ENCODE measurements at regions of chr20 and their contacts with region 1.

Region 1: DNA sequence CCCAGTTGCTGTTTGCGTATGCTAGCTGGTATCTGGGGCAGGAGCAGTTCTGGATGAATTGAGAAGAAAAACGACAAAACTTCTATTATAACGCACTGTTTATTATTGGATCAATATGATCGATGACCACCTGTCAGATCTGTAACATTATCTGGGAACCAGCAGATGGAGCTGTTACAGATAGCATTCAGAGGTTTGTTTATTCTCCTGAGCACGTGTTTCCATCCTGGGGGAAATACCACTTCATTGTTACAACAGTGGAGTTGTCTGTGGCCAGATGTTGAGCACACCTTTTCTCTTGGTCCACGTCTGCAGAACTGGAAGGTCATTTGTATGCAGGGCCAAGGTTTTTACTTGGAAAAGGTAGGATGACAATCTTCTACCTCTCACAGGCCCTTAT is 16.0 kb upstream of the NKX2-2 start:
- DNase-seq: no peak
- ATAC-seq: peak; percentile 69
- H3K4me3 Mint-ChIP-seq: no peak overlapping the region
- H3K27ac Mint-ChIP-seq: no peak overlapping the region
- H3K4me1 Mint-ChIP-seq: peaks cover 22% of the 10 kb centered on the region
- H3K27me3 Mint-ChIP-seq: peaks cover 54% of the 10 kb centered on the region
- CTCF ChIP-seq: peak; percentile 25; the same call in 1 of the 2 replicates

Region 2: GRCh38 chr20:21272279-21272678 is 257.6 kb before region 1 on chr20:
- CTCF ChIA-PET with region 1: no interaction called
- POLR2A ChIA-PET with region 1: no interaction called
- DNase-seq: no peak
- ATAC-seq: no peak
- H3K4me3 Mint-ChIP-seq: no peak overlapping the region
- H3K27ac Mint-ChIP-seq: no peak overlapping the region
- H3K4me1 Mint-ChIP-seq: no peaks in the 10 kb centered on the region
- H3K27me3 Mint-ChIP-seq: no peaks in the 10 kb centered on the region; the same call in 1 of the 2 replicates
- CTCF ChIP-seq: no peak

Region 3: DNA sequence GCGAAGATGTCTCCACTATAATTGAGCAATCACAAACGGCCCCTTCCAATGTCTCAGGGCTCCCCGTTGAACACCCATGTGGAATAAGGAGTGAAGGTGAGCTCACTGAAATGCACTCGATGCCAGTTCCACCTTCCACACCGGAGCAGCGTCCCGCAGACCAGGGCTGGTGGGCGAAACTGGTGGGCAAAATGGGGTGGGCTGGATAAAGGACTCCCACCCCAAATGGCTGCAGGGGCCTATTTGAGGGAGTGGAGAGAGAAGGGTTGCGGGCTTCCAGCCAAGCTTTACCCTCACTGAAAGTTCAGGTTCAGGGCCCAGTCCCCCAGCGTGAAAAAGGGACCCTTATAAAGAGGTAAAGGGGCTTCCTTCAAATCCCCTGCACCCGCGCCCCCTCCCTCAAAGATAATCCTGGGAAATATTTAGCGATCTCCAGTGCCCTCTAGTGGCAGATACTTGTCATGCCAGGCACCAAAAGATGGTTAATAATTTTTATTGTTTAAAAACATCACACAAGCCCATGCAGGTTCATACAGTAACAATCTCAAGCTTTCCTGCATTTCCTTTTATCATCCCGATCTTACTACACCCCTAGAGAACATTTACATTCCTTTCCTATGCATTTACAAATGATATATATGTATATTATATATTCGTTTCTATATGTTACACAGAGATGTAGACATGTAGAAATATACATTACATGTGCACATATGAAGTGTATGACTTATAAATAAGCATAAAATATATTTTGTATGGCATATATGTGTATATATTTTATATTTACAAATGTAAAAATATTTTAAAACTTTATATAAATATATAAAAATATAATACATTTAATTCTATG is 42.2 kb after region 1 on chr20:
- CTCF ChIA-PET with region 1: interaction called, 41 read pairs
- POLR2A ChIA-PET with region 1: no interaction called
- DNase-seq: peak; percentile 33
- ATAC-seq: peak; percentile 19; the same call in 1 of the 2 replicates
- H3K4me3 Mint-ChIP-seq: no peak overlapping the region
- H3K27ac Mint-ChIP-seq: no peak overlapping the region
- H3K4me1 Mint-ChIP-seq: peaks cover 37% of the 10 kb centered on the region
- H3K27me3 Mint-ChIP-seq: no peaks in the 10 kb centered on the region; the same call in 1 of the 2 replicates
- CTCF ChIP-seq: peak; percentile 97

Region 4: GRCh38 chr20:21632031-21632734 is 102.3 kb after region 1 on chr20:
- CTCF ChIA-PET with region 1: no interaction called
- POLR2A ChIA-PET with region 1: no interaction called
- DNase-seq: no peak
- ATAC-seq: no peak
- H3K4me3 Mint-ChIP-seq: no peak overlapping the region
- H3K27ac Mint-ChIP-seq: no peak overlapping the region
- H3K4me1 Mint-ChIP-seq: no peaks in the 10 kb centered on the region
- H3K27me3 Mint-ChIP-seq: peaks cover 10% of the 10 kb centered on the region
- CTCF ChIP-seq: no peak

Region 5: DNA sequence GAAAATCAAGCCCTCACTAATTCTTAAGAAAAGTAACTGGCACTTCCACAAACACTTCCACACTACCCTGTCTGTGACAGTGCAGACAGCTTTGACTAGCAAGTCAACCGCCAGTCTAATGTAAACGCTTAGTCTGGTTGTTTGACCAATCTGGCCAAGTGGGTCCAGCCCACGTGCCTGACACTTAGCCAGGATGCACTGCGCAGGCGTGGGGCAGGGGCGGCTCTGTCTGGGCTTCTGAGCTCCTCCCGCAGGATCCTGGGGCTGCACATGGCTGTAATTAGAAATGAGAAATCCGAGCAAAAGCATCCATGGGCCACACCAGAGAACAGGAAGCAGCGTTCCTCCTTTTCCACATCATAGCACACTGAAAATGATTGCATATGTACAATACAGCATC is 630.4 kb after region 1 on chr20:
- CTCF ChIA-PET with region 1: no interaction called
- POLR2A ChIA-PET with region 1: no interaction called
- DNase-seq: no peak
- ATAC-seq: no peak
- H3K4me3 Mint-ChIP-seq: no peak overlapping the region
- H3K27ac Mint-ChIP-seq: no peak overlapping the region
- H3K4me1 Mint-ChIP-seq: peaks cover 4% of the 10 kb centered on the region; the same call in 1 of the 2 replicates
- H3K27me3 Mint-ChIP-seq: no peaks in the 10 kb centered on the region
- CTCF ChIP-seq: no peak